AG04449 (cell line): ENCODE measurements at regions of chr14 and their contacts with region 1.

Region 1: DNA sequence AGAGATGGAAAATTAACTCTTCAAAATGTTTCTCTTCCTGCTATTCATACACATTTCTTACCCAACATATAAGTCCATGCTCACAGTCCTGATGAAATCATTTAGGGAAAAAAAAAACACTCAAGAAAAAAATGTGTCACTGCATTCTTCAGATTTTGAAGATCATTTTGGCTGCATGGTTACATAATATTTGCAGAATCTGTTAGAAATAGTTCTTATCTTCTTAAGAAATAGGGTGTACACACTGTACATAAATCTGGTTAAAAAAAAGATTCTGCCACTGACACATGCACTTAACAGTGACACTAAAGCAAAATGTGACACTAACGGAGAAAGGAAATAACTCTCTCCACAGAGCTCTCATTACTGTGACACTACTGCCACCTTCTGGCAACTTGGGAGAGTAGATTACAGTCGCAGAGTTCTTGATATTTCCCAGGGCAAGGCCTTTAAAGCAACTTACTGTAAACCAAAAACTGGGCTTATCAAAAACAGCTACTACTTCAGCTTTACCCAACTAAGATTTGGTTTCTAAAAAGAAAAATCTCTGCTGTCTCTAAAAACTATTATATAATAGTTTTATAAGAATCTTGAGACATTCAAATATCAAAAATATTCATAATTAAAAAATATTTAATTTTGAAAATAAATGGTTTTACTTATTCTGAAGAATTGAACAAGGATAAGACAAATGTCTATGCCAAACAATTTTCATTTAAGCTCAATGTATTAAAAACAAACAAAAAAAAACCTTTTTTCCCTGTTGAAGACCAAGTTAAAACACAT is 65.0 kb downstream of the SETD3 start:
- DNase-seq: peak; percentile 46
- H3K4me3 ChIP-seq: no peak overlapping the region
- CTCF ChIP-seq: peak; percentile 73

Region 2: GRCh38 chr14:99177886-99178835 is 237.5 kb before region 1 on chr14:
- CTCF ChIA-PET with region 1: no interaction called
- POLR2A ChIA-PET with region 1: no interaction called
- DNase-seq: no peak
- H3K4me3 ChIP-seq: no peak overlapping the region
- CTCF ChIP-seq: no peak

Region 3: DNA sequence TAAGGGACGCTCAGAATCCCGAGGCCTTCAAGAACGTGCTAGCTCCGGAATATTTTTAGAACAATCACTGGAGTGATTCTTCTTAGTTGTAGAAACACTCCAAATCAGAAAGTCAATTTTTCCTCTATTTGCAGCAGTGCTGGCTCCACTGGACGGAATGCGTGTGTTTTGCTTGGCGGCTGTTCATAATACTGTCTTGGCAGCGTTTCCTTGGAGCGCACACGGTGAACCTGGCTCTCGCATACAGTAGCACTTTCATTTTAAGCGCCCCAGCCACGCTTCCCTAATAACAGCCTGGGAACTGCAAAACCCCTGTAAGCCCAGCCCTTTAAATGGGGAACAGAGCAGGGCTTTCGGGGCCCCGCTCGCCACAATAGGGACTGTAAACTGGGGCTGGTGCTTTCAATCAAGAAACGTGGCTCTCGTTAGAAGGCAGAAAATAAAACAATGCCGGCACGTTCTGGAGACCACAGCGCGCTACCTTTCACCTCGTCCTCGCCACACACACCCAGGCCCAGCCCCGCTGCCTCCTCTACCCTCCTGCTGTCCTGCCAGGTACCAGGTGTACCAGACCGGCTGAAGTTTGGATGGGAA is 223.6 kb before region 1 on chr14:
- CTCF ChIA-PET with region 1: no interaction called
- POLR2A ChIA-PET with region 1: no interaction called
- DNase-seq: peak; percentile 5
- H3K4me3 ChIP-seq: peak overlapping the region; percentile 49
- CTCF ChIP-seq: no peak

Region 4: GRCh38 chr14:99320105-99320572 is 95.5 kb before region 1 on chr14:
- CTCF ChIA-PET with region 1: interaction called, 45 read pairs
- POLR2A ChIA-PET with region 1: no interaction called
- DNase-seq: no peak
- H3K4me3 ChIP-seq: no peak overlapping the region
- CTCF ChIP-seq: peak; percentile 89

Region 5: DNA sequence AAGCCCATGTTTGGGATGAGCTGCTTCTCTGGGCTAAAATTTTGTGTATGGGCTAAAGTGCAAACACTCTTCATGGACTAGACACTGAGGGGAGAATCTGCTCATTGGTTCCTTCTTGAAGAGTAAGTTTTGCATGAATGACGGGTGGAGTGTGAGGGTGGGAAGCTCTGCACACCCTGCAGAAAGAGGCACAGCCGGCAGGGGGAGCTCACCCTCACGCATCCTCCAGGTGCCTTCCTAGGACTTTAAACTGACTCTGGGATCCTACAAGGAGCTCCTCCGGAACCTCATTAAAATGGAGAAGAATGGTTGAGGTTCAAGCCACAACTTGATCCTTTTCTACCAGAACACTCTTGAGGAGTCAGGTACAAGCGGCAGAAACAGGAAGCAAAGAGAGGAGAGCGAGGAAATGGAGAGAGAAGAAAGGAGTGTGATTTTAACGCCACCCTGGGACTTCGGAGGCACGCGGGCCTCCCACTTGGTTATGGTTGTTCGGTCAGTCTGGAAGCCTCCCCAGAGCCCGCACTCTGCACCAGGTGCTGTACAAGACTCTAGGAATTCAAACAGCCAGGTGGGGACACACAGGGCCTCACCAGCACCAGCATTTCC is 22.5 kb before region 1 on chr14:
- CTCF ChIA-PET with region 1: interaction called, 358 read pairs
- POLR2A ChIA-PET with region 1: no interaction called
- DNase-seq: no peak
- H3K4me3 ChIP-seq: no peak overlapping the region
- CTCF ChIP-seq: peak; percentile 82

Region 6: DNA sequence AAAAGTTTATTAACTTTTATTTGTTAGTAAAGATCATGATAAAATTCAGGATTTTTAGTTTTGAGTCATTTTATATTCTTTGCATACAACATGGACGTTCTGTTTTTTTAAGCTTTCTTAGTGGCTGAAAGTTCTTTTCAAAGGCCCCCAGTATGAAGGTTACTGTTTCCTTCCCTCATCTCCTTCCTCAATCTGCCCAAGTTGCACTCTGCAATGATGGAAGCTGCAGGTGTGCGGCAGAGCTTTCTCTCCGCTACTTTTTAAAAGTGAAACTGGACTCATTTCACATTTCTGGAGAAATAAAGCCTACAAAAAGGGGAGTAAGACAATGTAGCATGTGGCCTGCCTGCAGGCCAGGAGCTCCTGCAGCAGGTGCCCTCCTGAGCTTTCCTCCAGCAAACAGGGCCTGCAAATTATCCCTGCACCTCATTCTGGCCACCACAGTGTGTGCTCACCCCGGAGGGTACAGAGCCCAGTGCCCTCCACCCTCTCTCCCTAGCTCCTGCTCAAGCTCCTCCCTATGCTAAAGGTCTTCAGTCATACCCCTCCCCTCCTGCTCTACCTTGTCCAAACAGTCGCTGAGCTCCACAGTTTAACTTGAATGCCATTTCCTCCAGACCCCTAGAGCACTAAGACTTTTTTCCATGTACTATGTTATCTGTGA is 13.9 kb before region 1 on chr14:
- CTCF ChIA-PET with region 1: interaction called, 358 read pairs
- POLR2A ChIA-PET with region 1: no interaction called
- DNase-seq: no peak
- H3K4me3 ChIP-seq: no peak overlapping the region
- CTCF ChIP-seq: no peak

Region 7: DNA sequence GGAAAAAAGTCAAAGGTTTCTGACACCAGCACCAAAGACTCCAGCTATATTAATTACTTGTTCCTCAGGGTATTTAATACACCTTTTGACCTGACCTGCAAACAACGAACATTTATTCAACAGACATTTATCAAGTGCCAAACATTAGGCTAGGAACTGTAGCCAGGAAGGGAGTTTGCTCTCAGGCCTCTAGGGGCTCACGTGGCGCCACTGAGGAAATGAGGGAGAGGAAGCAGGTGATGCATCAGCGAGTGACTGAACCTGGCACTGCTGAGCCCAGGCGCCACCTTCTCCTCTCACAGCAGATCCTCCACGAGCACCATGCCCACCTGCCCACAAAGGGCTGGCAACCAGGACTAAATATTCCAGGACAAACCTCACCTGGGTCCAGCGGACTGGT is 14.8 kb after region 1 on chr14:
- CTCF ChIA-PET with region 1: interaction called, 59 read pairs
- POLR2A ChIA-PET with region 1: no interaction called
- DNase-seq: no peak
- H3K4me3 ChIP-seq: no peak overlapping the region
- CTCF ChIP-seq: no peak